ENCODE measurements at regions of chr11 and their contacts with region 1.

Region 1: DNA sequence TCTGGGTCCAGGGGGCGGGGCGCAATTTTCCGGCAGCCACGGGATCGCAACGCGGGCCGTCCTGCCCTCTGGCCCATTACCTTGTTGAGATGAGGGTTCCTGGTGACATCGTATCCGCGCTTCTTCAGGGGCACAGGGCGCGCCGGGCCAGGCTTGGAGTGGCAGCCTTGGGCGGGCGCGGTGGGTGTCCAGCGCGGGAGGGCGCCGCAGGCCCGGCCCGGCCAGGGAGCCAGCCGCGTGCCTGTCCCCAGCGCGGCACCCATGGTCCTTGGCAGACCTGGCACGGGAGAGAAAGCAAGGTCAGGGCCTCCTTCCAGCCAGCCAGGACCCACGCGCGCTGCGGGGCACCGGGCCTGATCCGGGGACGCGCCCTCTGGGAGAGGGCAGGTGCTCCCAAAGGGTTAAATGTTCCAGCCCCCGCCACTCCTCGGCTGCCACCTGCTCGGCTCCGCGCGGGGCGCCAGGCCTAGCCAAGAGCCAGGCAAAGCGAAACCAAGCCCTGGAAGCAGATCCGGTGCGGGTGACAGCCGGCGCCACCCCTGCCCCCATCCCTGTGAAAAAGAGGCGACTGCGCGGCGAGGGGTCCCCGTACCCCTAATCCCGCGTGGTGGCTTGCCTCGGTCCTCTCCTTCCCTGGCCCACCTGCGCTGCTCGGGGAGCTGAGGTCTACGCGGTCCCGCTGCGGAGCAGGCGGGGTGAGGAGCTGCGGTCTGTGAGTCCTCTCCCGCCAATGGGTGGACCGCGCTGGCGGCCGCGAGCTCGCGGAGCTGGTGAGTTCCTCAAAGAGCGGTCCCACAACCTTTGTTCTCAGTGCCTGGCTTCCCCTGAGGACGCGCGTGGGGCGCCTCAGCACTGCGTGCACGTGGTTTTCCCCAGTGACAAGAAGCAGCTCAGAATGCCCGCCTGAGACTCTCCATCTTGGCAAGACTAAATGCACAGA is at the start of gene ME3:
- DNase-seq: peak; percentile 70 to 91 (median 78)
- H3K4me3 ChIP-seq: peak within 1 kb of the TSS; percentile 93
- H3K27ac ChIP-seq: peak within 1 kb of the TSS; percentile 93 to 97
- H3K4me1 ChIP-seq: peaks cover 4% of the 10 kb centered on the region
- H3K27me3 ChIP-seq: no peaks in the 10 kb centered on the region
- CTCF ChIP-seq: no peak
- EP300 ChIP-seq: no peak
- POLR2A ChIP-seq: peak; percentile 47
- total RNA-seq, gene ME3: 35.9 to 48.6 (median 45.7) TPM

Region 2: DNA sequence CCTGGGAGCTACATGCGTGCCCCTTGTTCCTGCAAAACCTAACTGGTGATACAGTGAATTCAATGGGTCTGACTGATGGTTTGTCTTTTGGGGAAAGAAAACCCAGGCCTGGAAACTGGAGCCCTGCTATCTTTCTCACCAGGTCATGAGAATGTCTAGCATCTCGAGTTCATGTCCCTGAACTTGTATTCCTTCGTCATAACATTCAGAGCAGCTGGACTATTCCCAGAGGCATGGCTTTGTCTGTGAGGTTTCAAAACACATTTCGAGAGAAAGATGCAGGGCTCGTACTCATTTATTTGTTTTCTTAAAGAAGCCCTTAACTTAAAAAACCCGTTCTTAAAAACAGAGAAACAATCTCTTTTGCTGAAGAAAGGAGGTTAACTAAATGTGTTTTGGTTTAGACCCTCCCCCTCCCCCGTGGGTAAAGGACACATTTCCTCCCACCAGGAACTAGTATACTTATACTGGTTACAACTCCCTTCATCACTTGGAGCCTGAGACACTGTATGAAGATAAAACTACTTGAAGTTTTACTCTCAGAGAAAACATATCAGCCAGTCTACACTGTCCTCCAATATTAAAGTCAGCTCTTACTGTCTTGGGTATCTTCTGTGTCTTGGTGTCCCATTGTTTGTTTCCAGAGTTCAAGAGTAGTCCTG is 42.8 kb before region 1 on chr11:
- intact Hi-C with region 1: loop called in 1 of 4 experiments (anchors 2 kb)
- DNase-seq: peak in 4 of 5 donors; percentile 41 to 73 (median 60)
- H3K4me3 ChIP-seq: no peak overlapping the region
- H3K27ac ChIP-seq: peak overlapping the region; percentile 53 to 84
- H3K4me1 ChIP-seq: peaks cover 32% of the 10 kb centered on the region
- H3K27me3 ChIP-seq: no peaks in the 10 kb centered on the region
- CTCF ChIP-seq: no peak
- EP300 ChIP-seq: no peak
- POLR2A ChIP-seq: no peak

Measured in ovary (tissue), 10 donors.